PC-9 (cell line): ENCODE measurements at regions of chr10 and their contacts with region 1.

Region 1: GRCh38 chr10:68331455-68332258 is at the start of gene HNRNPH3:
- DNase-seq: peak; percentile 93 to 99
- H3K4me3 ChIP-seq: peak within 1 kb of the TSS; percentile 78
- H3K27ac ChIP-seq: peak within 1 kb of the TSS; percentile 91
- H3K4me1 ChIP-seq: peaks cover 47% of the 10 kb centered on the region
- H3K27me3 ChIP-seq: no peaks in the 10 kb centered on the region
- CTCF ChIP-seq: no peak
- total RNA-seq, gene HNRNPH3: 161 and 175 TPM in 2 replicates

Region 2: DNA sequence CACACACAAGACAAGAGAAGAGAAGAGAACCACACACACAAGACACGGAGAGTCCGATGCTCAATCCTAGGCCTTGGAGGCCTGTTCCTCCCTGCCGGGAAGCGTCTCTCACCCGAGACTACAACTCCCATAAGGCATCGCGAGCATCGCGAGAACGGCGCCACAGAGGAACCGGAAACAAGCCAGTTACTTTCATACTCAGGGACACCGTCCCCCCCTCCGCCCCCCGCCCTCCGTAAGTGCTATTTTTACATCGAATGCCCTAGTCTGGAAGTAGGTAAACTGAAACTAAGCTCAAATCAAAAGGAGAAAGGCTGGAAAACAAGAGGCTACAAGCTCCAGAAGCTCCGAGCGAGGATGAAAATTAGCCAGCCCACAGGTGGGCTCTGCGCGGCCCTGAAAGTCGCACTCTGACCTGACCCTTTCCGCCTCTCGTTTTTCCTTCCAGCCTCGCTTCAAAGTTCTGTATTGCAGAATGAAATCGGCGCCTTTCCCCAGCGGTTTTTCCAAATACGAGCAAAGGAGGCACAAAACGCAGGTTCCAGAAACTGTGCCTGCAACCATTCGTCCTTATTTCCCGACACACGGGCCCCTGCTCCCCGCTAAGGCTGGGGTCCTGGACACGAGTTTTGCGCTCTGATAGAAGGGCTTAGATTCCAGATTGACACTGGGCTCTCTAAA is 482.2 kb before region 1 on chr10:
- CTCF ChIA-PET with region 1: no interaction called
- POLR2A ChIA-PET with region 1: no interaction called
- intact Hi-C with region 1: loop called (anchors 10 kb)
- DNase-seq: peak; percentile 81 to 90
- H3K4me3 ChIP-seq: peak overlapping the region; percentile 79
- H3K27ac ChIP-seq: peak overlapping the region; percentile 88
- H3K4me1 ChIP-seq: peaks cover 5% of the 10 kb centered on the region
- H3K27me3 ChIP-seq: no peaks in the 10 kb centered on the region
- CTCF ChIP-seq: no peak

Region 3: DNA sequence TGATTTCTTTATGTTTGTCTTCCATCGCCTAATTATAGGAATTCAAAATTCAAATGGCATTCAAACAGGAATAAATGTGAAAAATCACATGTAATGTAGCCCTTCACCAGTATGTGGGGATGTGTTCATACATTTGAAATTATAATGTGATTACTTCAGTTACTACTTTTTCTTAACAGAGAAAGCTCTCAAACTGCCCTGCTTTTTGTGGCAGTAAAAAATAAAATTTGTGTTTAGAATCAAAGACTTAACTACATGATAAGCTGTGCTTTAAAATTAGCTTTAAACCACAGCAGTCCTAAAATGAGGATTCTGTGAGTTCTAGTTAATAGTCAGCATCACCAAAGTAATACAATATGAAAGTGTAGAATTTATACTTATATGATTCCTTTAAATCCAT is 248.8 kb before region 1 on chr10:
- CTCF ChIA-PET with region 1: interaction called, 3 read pairs
- POLR2A ChIA-PET with region 1: interaction called, 12 read pairs
- intact Hi-C with region 1: no loop called
- DNase-seq: no peak
- H3K4me3 ChIP-seq: no peak overlapping the region
- H3K27ac ChIP-seq: peak overlapping the region; percentile 10; the same call in 1 of the 2 replicates
- H3K4me1 ChIP-seq: peaks cover 53% of the 10 kb centered on the region
- H3K27me3 ChIP-seq: no peaks in the 10 kb centered on the region
- CTCF ChIP-seq: peak; percentile 80

Region 4: GRCh38 chr10:68342909-68343516 is 11.4 kb after region 1 on chr10:
- CTCF ChIA-PET with region 1: no interaction called
- POLR2A ChIA-PET with region 1: interaction called, 17 read pairs
- intact Hi-C with region 1: no loop called
- DNase-seq: no peak
- H3K4me3 ChIP-seq: no peak overlapping the region
- H3K27ac ChIP-seq: no peak overlapping the region
- H3K4me1 ChIP-seq: no peaks in the 10 kb centered on the region
- H3K27me3 ChIP-seq: no peaks in the 10 kb centered on the region
- CTCF ChIP-seq: no peak

Region 5: DNA sequence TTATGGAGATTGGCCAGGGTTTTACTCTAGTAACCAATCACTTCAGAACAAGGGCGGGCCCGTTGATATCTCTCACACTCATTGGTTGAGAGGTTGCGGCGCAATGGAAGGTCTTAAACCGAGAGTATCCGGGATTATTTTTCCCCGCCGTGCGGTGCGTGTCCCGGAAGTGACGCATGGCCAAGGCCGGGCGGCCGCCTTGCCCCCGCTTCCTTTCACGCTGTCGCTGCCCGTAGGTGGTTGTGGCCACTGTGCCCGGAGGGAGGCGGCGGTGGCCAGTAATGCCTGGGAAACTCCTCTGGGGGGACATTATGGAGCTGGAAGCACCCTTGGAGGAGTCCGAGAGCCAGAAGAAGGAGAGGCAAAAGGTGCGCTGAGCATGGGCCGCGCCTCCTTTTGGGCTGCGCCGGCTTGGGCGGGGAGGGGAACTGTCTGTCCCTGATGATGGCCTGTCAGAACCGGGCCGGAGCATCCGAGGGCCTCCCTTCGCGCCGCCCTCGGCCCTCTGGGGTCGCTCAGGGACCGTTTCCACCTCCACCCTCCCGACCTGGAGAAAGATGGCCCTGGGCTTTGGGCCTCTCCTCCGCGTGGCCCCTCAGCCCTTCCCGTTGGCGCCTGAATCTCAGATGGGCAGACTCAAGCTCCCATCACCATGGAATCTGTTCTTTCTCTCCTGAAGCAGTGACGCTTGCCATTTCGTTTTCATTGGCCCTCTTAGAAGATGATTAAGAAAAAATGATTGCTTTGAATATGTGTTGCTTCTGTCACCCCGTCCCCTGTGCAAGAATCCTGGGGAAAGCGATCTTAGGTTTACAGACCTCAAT is 569.7 kb after region 1 on chr10 and contains the start of gene DDX50:
- CTCF ChIA-PET with region 1: no interaction called
- POLR2A ChIA-PET with region 1: no interaction called
- intact Hi-C with region 1: loop called (anchors 2 kb)
- DNase-seq: peak; percentile 97 to 99
- H3K4me3 ChIP-seq: peak within 1 kb of the TSS; percentile 75
- H3K27ac ChIP-seq: peak within 1 kb of the TSS; percentile 80
- H3K4me1 ChIP-seq: peaks cover 18% of the 10 kb centered on the region
- H3K27me3 ChIP-seq: no peaks in the 10 kb centered on the region
- CTCF ChIP-seq: no peak; the same call in 1 of the 2 replicates
- total RNA-seq, gene DDX50: 33.8 and 37.7 TPM in 2 replicates

Region 6: GRCh38 chr10:69087590-69088470 is 756.2 kb after region 1 on chr10 and contains the start of gene SRGN:
- CTCF ChIA-PET with region 1: no interaction called
- POLR2A ChIA-PET with region 1: interaction called, 12 read pairs
- intact Hi-C with region 1: no loop called
- DNase-seq: peak; percentile 23 to 63
- H3K4me3 ChIP-seq: peak within 1 kb of the TSS; percentile 48
- H3K27ac ChIP-seq: peak within 1 kb of the TSS; percentile 59
- H3K4me1 ChIP-seq: peaks cover 4% of the 10 kb centered on the region; the same call in 1 of the 2 replicates
- H3K27me3 ChIP-seq: no peaks in the 10 kb centered on the region
- CTCF ChIP-seq: no peak
- total RNA-seq, gene SRGN: 57.4 and 58.9 TPM in 2 replicates